Ascending aorta (tissue), 2 donors: ENCODE measurements at regions of chr1 and their contacts with region 1.

Region 1: DNA sequence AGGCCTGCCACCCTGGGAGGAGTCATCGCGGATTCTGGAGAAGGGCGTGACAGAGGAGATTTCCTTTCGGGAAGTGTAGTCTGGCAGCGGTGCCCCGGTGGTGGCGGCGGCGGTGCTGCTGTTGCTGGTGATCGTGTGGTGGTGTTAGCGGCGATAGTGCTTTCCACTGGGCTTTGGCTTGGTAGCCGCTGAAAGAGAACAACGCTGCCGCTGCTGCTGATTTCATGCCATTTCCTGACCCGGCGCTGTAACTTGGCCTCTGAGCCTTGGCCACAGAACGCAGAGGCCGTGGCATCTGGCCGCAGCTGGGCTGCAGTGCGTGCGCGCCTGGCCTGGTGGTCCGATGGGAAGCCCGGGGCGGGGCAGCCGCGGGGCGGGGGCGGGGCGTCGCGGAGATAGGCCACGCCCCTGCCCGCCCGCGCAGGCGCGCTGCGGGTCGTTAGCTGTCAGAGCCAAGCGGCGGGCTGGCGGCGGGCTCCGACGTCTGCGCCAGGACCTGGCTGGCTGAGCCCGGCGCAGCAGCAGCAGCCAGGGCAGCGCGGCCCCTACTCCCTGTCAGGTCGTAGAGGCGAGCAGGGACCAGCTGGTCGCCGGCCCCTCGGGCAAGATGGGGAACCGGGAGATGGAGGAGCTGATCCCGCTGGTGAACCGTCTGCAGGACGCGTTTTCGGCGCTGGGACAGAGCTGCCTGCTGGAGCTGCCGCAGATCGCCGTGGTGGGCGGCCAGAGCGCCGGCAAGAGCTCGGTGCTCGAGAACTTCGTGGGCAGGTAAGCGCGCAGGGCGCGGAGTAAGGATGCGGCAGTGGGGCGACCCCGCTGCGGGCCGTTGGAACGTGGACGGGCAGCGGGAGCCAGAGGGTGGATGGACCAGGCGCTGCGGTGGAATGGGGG is at the start of gene DNM3:
- DNase-seq: peak; percentile 46 to 93
- H3K4me3 ChIP-seq: peak within 1 kb of the TSS; percentile 71 to 77
- H3K27ac ChIP-seq: peak within 1 kb of the TSS; percentile 66 to 73
- H3K4me1 ChIP-seq: no peaks in the 10 kb centered on the region
- H3K27me3 ChIP-seq: no peaks in the 10 kb centered on the region
- CTCF ChIP-seq: no peak
- total RNA-seq, gene DNM3: 9.6 TPM

Region 2: GRCh38 chr1:171654942-171655745 is 186.2 kb before region 1 on chr1:
- intact Hi-C with region 1: loop called (anchors 5 kb)
- DNase-seq: peak in 1 of 2 donors; percentile 78
- H3K4me3 ChIP-seq: peak overlapping the region in 1 of 2 donors; percentile 32
- H3K27ac ChIP-seq: peak overlapping the region; percentile 87 to 96
- H3K4me1 ChIP-seq: peaks cover 8 to 36% of the 10 kb centered on the region in 2 donors
- H3K27me3 ChIP-seq: no peaks in the 10 kb centered on the region
- CTCF ChIP-seq: peak in 2 of 3 experiments; percentile 45 to 47

Region 3: GRCh38 chr1:171754353-171754705 is 87.0 kb before region 1 on chr1:
- intact Hi-C with region 1: no loop called
- DNase-seq: no peak
- H3K4me3 ChIP-seq: no peak overlapping the region
- H3K27ac ChIP-seq: peak overlapping the region; percentile 58 to 76
- H3K4me1 ChIP-seq: peaks cover 0 to 13% of the 10 kb centered on the region in 2 donors
- H3K27me3 ChIP-seq: no peaks in the 10 kb centered on the region
- CTCF ChIP-seq: no peak

Region 4: DNA sequence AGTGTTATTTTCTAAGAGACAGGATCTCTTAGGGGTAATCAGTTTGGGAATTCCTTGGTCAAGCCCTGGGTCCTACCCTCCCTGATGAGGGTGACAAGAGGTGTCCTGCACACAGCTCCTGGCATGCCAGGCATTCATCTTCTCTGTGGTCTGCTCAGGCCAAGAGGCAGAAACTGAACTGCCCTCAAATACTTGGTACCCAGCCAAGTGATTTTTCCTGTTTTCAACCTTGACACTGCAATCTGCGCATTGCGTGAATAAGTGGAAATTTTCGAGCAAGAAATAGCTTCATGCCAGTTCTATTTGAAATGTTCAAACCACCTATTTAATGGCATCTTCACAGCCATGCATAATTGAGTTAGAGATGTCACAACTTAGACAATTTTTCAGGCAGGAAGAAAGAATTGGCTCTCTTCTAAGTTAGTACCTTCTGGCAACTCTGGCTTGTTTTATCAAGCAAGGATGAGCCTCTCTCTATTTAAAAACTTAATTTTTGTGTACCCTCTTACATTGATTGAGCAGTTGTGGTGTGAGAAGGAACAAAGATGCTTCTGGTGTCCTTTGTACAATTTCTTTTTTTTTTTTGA is 27.0 kb after region 1 on chr1:
- intact Hi-C with region 1: no loop called
- DNase-seq: no peak
- H3K4me3 ChIP-seq: no peak overlapping the region
- H3K27ac ChIP-seq: no peak overlapping the region
- H3K4me1 ChIP-seq: no peaks in the 10 kb centered on the region
- H3K27me3 ChIP-seq: no peaks in the 10 kb centered on the region
- CTCF ChIP-seq: no peak

Region 5: DNA sequence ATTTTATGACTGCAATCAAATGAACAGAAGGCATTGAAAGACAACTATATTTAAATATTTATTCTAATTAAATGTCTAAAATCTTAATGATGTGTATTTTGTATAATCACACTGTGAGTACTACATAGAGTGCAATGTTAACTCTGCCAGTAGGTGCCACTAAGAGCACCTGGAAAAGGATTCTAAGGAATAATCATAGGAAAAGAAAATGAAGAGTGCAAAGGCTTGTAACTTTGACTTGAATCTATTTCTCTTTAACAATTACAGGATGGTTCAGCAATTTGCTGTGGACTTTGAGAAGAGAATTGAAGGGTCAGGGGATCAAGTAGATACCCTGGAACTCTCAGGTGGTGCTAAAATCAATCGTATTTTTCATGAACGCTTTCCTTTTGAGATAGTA is 200.4 kb after region 1 on chr1:
- intact Hi-C with region 1: no loop called
- DNase-seq: no peak
- H3K4me3 ChIP-seq: peak overlapping the region in 1 of 2 donors; percentile 13
- H3K27ac ChIP-seq: no peak overlapping the region
- H3K4me1 ChIP-seq: no peaks in the 10 kb centered on the region
- H3K27me3 ChIP-seq: no peaks in the 10 kb centered on the region
- CTCF ChIP-seq: peak in 2 of 3 experiments; percentile 38 to 58